ENCODE measurements at regions of chr22 and their contacts with region 1.

Region 1: GRCh38 chr22:40368016-40368415 is 2.4 kb upstream of the SGSM3 start:
- DNase-seq: no peak
- ATAC-seq: no peak
- H3K4me3 ChIP-seq: no peak overlapping the region
- H3K27ac ChIP-seq: no peak overlapping the region
- H3K4me1 ChIP-seq: peaks cover 7% of the 10 kb centered on the region
- H3K27me3 ChIP-seq: no peaks in the 10 kb centered on the region
- CTCF ChIP-seq: no peak

Region 2: GRCh38 chr22:39097098-39098020 is 1270.7 kb before region 1 on chr22 and contains the start of gene APOBEC3H:
- CTCF ChIA-PET with region 1: no interaction called
- POLR2A ChIA-PET with region 1: interaction called, 11 read pairs
- in situ Hi-C with region 1: no loop called
- intact Hi-C with region 1: no loop called
- DNase-seq: no peak
- ATAC-seq: 0 out of 2 replicates have a peak, but pooled peaks have one; percentile 38
- H3K4me3 ChIP-seq: no peak within 1 kb of the TSS
- H3K27ac ChIP-seq: no peak within 1 kb of the TSS
- H3K4me1 ChIP-seq: no peaks in the 10 kb centered on the region
- H3K27me3 ChIP-seq: no peaks in the 10 kb centered on the region
- CTCF ChIP-seq: no peak
- total RNA-seq, gene APOBEC3H: not detected

Region 3: DNA sequence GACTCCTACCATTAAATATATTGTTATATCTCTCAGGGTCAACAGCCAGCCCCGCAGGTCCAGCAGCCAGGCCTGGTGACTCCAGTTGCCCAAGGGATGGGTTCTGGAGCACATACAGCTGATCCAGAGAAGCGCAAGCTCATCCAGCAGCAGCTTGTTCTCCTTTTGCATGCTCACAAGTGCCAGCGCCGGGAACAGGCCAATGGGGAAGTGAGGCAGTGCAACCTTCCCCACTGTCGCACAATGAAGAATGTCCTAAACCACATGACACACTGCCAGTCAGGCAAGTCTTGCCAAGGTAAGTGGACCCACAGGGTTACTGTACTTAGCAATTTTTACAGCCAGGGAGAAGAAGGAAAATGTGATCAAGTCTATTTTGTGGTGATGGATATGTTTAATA is 759.4 kb after region 1 on chr22:
- CTCF ChIA-PET with region 1: no interaction called
- POLR2A ChIA-PET with region 1: interaction called, 14 read pairs
- in situ Hi-C with region 1: no loop called
- intact Hi-C with region 1: no loop called
- DNase-seq: no peak
- ATAC-seq: no peak
- H3K4me3 ChIP-seq: no peak overlapping the region
- H3K27ac ChIP-seq: no peak overlapping the region
- H3K4me1 ChIP-seq: no peaks in the 10 kb centered on the region
- H3K27me3 ChIP-seq: no peaks in the 10 kb centered on the region
- CTCF ChIP-seq: no peak